ENCODE measurements at regions of chr1 and their contacts with region 1.

Region 1: GRCh38 chr1:223748773-223749733 is 36.7 kb downstream of the CAPN2 start:
- DNase-seq: peak; percentile 78
- CTCF ChIP-seq: peak; percentile 81

Region 2: DNA sequence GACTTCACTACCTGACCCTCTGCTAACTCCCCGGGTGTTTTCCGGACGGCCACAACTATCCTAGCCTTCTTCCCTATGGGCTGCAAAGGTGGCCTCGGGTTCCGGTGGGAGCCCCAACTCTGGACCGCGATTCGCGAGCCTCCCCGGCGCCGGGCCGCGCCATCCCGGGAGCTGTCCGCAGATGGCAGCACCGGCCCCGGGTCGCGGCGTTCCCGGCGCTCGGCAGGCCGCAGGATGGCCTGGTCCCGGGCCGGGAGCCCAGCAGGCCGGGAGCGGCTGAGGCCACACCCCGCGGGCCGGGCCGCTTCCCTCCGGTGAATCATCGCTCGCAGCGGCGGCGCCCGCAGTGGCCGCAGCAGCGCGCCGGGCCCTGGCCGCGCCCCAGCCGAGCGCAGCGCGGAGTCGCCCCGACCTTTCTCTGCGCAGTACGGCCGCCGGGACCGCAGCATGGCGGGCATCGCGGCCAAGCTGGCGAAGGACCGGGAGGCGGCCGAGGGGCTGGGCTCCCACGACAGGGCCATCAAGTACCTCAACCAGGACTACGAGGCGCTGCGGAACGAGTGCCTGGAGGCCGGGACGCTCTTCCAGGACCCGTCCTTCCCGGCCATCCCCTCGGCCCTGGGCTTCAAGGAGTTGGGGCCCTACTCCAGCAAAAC is 36.7 kb before region 1 on chr1 and contains the start of gene CAPN2:
- CTCF ChIA-PET with region 1: interaction called, 13 read pairs
- POLR2A ChIA-PET with region 1: no interaction called
- DNase-seq: peak; percentile 74
- CTCF ChIP-seq: peak; percentile 51

Region 3: GRCh38 chr1:223726380-223727001 is 22.6 kb before region 1 on chr1:
- CTCF ChIA-PET with region 1: interaction called, 17 read pairs
- POLR2A ChIA-PET with region 1: no interaction called
- DNase-seq: peak; percentile 81
- CTCF ChIP-seq: no peak

Region 4: DNA sequence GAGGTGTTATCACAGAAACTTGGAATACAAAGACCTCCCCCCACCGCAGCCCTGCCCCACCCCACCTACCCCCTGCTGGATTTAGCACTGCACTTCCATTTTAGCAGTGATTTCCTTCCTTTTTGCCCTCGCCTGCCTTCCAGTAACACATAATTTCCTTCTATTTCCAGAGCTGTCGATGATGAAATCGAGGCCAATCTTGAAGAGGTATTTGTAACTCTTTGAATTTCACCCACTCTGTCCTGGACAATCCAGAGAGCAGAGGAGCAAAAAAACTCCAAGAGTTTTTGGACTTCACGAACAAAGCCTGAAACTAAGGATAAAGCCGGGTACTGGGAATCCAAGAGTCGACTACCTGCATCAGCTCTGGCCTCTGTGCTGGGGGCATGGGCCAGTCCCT is 12.4 kb after region 1 on chr1:
- CTCF ChIA-PET with region 1: interaction called, 19 read pairs
- POLR2A ChIA-PET with region 1: no interaction called
- DNase-seq: no peak
- CTCF ChIP-seq: no peak

Measured in GM10248 (cell line).